ENCODE measurements at regions of chr12 and their contacts with region 1.

Region 1: GRCh38 chr12:12716793-12717585 is at the start of gene CDKN1B:
- DNase-seq: peak; percentile 80
- H3K4me3 Mint-ChIP-seq: peak within 1 kb of the TSS; percentile 99
- H3K27ac Mint-ChIP-seq: peak within 1 kb of the TSS; percentile 98
- H3K4me1 Mint-ChIP-seq: peaks cover 52% of the 10 kb centered on the region
- H3K27me3 Mint-ChIP-seq: no peaks in the 10 kb centered on the region
- total RNA-seq, gene CDKN1B: 49.0 and 53.4 TPM in 2 replicates

Region 2: DNA sequence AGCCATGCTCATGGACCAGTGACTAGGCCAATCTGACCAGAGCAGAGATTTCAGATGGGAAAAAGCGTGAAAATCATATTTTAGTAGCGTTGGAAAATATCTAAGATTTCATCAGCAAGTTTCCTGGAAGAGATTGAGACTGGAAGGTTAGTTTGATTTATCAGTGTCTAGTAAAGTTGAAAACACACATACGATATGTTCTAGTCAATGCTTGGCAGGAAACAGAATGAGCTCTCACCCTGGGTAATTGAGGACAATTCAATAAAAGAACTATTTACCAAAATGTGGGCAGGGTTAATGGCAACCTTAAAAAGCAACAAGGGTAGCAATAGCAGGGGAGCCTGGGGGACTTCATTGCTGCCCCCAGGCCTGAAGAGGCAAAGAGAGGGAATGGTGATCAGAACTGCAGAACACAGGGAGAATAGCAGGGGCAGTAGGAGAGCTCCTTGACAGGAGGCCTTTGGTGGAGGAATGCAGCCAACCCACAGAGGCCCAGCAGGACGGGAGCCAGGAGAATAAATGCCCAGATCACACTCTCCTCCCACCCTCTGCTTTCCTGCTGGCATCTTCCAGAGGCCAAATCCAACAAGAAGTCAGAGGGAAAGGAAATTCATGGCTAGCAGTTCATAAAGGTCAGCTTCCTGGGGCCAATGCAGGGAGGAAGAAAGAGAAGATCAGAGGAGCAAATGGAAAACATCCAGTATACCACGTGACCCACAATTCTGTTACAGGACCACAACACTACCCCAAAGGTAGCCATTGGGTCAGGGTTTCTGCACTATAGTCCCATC is 422.6 kb before region 1 on chr12:
- intact Hi-C with region 1: no loop called
- DNase-seq: no peak
- H3K4me3 Mint-ChIP-seq: no peak overlapping the region
- H3K27ac Mint-ChIP-seq: no peak overlapping the region
- H3K4me1 Mint-ChIP-seq: no peaks in the 10 kb centered on the region
- H3K27me3 Mint-ChIP-seq: peaks cover 2% of the 10 kb centered on the region

Region 3: GRCh38 chr12:12356886-12357718 is 359.9 kb before region 1 on chr12 and contains the start of gene BORCS5:
- intact Hi-C with region 1: loop called (anchors 2 kb)
- DNase-seq: peak; percentile 98
- H3K4me3 Mint-ChIP-seq: peak within 1 kb of the TSS; percentile 96
- H3K27ac Mint-ChIP-seq: peak within 1 kb of the TSS; percentile 99
- H3K4me1 Mint-ChIP-seq: peaks cover 41% of the 10 kb centered on the region
- H3K27me3 Mint-ChIP-seq: no peaks in the 10 kb centered on the region
- total RNA-seq, gene BORCS5: 41.8 and 45.9 TPM in 2 replicates

Region 4: DNA sequence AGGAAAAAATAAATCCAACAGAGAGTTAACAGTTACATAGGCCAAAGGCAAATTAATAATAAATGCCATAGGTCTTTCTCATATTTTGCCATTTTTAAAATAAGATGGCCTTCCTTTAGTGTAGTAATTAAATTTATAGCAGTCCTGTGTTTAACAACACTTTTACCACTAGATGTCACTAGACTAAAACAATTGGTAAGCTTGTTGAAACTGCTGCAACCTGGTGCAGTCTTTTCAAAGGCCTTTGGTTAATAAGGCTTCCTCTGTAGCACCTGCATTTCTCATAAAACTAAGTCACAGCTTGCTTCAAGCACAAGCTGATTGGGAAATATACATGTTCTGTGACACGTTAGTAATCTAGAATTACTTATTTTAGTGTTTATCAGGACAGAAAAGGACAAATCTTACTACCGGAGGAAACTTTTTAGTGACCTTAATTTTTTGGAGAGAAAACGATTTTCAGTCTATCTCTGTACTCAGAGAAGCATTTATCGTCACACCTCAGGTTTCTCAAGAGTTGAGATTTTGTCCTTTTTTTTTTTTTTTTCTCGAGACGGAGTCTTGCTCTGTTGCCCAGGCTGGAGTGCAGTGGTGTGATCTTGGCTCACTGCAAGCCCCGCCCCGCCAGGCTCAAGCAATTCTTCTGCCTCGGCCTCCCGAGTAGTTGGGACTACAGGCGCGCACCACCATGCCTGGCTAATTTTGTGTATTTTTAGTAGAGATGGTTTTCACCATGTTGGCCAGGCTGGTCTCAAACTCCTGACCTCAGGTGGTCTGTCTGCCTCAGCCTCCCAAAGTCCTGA is 340.1 kb before region 1 on chr12:
- intact Hi-C with region 1: loop called (anchors 1 kb)
- DNase-seq: no peak
- H3K4me3 Mint-ChIP-seq: no peak overlapping the region
- H3K27ac Mint-ChIP-seq: peak overlapping the region; percentile 59
- H3K4me1 Mint-ChIP-seq: peaks cover 34% of the 10 kb centered on the region
- H3K27me3 Mint-ChIP-seq: no peaks in the 10 kb centered on the region

Region 5: DNA sequence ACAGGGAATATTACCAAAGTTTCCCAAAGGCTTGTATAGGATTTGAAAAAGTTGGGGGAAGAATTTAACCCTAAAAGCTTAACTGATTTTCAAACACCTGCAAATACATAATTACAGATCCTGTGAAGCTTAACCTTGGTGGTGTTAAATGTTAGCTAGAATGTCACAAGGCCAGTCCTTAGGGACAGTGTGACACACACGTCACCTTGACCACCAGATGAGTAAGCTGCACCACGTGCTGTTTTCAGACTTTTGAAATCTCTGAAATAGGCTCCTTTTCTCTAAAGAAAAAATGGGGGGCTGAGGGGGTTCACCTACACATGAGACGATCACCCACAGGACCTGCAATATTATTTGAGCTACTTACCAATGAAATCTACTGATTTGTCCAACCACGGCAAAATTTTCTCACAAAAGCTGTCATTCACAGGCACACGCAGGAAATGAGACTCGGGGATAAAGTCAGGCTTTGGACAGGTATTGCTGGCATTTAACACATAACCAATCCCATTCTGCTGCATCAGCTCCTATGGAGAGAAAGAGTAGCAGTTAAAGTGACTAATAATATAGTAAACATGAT is 230.2 kb before region 1 on chr12:
- intact Hi-C with region 1: loop called (anchors 5 kb)
- DNase-seq: no peak
- H3K4me3 Mint-ChIP-seq: no peak overlapping the region
- H3K27ac Mint-ChIP-seq: peak overlapping the region; percentile 80
- H3K4me1 Mint-ChIP-seq: peaks cover 51% of the 10 kb centered on the region
- H3K27me3 Mint-ChIP-seq: no peaks in the 10 kb centered on the region

Region 6: DNA sequence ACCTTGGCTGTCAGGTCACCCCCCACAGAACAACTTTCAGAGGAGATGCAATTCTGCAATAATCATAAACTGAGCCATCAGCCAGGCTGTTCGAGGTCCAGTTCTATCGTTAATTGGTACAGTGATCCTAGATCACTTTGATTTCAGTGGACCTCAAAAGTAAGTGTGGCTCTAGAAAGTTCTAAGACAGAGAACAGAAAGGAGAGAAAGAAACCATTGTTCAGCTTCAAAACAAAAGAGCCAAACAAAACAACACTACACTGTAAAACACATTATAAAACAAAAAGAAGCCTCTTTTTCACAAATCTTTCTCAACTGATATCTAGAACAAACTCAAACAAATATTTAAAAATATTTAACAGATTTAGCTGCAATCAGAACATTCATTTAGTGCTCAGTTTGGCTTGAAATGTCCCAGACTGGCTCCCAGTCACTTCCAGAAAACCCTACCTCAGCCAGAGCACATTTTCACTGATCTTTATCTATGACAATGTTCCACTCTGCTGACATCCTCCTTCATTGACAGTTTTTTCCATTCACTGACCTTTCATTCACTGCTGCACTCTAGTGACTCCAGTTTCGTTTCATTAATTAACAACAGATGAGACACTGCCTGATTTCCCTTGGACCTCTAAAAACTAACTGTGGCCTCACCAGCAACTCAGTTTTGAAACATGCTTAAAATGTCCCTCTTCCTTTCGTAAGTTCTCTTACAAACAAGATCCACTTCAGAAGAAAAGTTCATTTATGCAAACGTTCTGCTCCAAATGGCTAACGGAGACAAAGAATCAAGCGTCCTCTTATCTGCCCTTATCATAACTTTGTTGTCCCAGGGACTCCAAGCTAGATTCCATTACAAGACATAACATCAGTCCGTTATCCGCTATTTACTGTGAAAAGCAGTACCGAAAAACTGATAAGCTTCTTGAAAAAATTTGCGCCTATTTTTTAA is 211.2 kb before region 1 on chr12:
- intact Hi-C with region 1: loop called (anchors 5 kb)
- DNase-seq: no peak
- H3K4me3 Mint-ChIP-seq: peak overlapping the region; percentile 53
- H3K27ac Mint-ChIP-seq: peak overlapping the region; percentile 97
- H3K4me1 Mint-ChIP-seq: peaks cover 70% of the 10 kb centered on the region
- H3K27me3 Mint-ChIP-seq: no peaks in the 10 kb centered on the region

Region 7: DNA sequence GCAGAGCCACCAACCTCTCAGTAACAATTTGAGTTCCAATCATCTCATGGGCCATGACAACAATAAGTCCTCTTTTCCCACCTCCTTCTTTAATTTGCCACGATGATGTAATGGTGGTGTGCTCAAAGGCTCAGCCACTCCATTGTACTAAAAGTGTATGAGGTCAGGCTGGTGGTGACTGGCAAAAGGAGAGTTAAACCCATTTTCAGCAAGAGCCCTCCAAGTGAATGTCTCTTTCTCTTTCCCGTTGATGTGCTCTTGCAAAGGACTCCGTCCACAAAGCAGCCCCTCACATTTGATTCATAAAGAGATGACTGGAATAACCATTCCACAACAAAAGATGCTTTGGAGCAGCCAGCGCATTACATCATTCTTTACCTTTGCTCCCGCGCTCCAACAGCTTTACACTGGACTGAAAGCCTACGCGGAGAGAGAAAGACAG is 195.9 kb before region 1 on chr12:
- intact Hi-C with region 1: no loop called
- DNase-seq: no peak
- H3K4me3 Mint-ChIP-seq: no peak overlapping the region
- H3K27ac Mint-ChIP-seq: no peak overlapping the region
- H3K4me1 Mint-ChIP-seq: peaks cover 14% of the 10 kb centered on the region
- H3K27me3 Mint-ChIP-seq: no peaks in the 10 kb centered on the region

Region 8: DNA sequence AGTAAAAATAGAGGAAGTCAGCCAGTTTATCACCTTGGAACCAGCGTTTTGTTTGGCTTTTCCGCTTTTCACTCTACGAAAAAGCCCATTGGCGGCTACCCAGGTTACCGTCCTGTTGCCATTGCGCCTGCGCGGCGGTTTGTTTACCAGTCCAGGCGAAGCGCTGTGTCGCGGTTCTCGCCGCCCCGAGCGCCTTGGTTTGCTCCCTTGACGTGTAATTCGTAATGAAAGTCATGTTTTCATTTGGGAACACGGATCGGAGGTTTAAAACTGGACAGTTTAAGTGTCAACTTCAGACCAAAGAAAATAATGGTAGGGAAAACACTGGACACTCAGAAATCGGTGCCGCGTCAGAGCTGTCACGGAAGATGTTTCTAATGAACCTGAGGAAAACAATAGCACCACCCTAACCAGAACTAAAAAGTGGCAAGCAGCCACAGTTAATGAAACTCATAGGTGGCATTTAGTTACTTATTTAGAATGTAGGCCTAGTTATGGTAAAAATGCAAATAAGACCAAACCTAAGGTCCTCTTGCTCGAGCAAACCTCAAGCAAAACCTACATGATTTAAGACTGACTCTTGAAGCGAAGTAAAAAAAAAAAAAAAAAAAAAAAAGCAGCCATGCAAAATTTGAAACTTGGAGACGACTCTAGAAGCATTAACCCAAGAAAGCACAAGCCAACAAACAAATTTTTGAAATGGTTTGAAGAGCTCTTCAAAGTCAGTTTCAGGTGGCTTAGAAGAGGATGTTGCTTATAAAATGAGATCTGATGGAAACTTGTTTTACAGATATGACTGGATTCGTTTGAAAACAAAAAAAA is 20.2 kb before region 1 on chr12:
- intact Hi-C with region 1: loop called (anchors 1 kb)
- DNase-seq: peak; percentile 90
- H3K4me3 Mint-ChIP-seq: peak overlapping the region; percentile 97
- H3K27ac Mint-ChIP-seq: peak overlapping the region; percentile 99
- H3K4me1 Mint-ChIP-seq: peaks cover 58% of the 10 kb centered on the region
- H3K27me3 Mint-ChIP-seq: no peaks in the 10 kb centered on the region

Measured in activated T-helper 2 cell treated with anti-CD3 and anti-CD28 coated beads, Interferon-gamma antibody, Interleukin-2, Interleukin-4, amounts not matched to agents 10 μg/mL and 5 μg/mL and 100 μg/mL, durations not matched to agents 14 hours and 24 hours and 36 hours (primary cell).